ENCODE measurements at regions of chr3 and their contacts with region 1.

Region 1: GRCh38 chr3:69306239-69307185 is 79.4 kb downstream of the FRMD4B start:
- DNase-seq: peak; percentile 82
- ATAC-seq: peak; percentile 98
- H3K4me3 Mint-ChIP-seq: peak overlapping the region; percentile 17
- H3K27ac Mint-ChIP-seq: peak overlapping the region; percentile 65
- H3K4me1 Mint-ChIP-seq: peaks cover 8% of the 10 kb centered on the region
- H3K27me3 Mint-ChIP-seq: no peaks in the 10 kb centered on the region

Region 2: DNA sequence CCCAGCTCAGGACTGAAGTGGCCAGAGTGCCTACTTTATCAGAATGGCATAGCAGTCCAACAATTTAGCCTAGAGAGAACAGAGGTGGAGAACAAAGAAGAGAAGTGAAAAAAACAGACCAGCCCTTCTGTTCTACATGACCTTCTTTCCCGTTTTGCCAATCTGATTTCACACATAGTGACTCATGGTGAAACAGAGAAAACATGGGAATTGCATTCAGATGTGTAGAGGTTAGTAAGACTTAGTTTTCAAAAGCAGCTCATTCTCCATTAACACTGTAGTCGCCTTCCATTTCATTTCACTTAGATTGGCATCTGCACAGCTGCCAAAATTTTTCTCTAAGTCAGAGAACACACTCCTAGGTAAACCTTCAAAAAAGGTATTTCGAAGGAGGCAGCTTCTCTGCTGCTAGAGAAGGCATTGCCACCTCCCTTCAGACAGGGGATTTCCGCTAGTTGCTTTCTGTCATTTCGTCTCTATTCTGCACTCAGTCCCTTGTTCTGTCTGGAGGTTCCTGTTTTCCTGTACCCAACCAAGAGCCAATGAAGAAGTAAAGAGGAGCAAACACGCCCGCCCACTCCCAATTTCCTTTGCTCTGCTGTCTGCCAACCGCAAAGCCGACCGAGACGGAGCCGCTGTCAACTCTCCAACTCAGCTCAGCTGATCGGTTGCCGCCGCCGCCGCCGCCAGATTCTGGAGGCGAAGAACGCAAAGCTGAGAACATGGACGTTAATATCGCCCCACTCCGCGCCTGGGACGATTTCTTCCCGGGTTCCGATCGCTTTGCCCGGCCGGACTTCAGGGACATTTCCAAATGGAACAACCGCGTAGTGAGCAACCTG is 222.0 kb before region 1 on chr3 and contains the start of gene ARL6IP5:
- CTCF ChIA-PET with region 1: no interaction called
- POLR2A ChIA-PET with region 1: no interaction called
- DNase-seq: peak; percentile 96
- ATAC-seq: peak; percentile 65
- H3K4me3 Mint-ChIP-seq: peak within 1 kb of the TSS; percentile 95
- H3K27ac Mint-ChIP-seq: peak within 1 kb of the TSS; percentile 89
- H3K4me1 Mint-ChIP-seq: peaks cover 57% of the 10 kb centered on the region
- H3K27me3 Mint-ChIP-seq: no peaks in the 10 kb centered on the region
- total RNA-seq, gene ARL6IP5: 148 to 153 TPM

Region 3: DNA sequence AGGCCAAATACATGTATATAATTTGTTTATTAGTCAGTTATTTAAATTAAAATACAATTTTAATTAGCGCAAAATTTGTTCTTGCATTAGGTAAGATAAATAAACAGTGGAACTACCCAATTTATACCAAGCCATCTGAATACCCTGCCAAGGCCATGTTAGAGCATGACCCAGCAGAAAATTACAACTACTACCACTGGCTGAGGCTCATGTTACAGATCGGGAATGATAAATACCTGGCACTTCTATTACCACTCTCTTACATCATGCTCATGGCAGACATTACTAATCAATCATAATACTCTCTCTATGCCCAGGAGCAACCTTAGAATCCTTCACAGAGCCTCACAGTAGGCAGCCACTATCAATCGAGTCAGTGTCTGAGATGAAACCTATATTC is 162.9 kb before region 1 on chr3:
- CTCF ChIA-PET with region 1: interaction called, 13 read pairs
- POLR2A ChIA-PET with region 1: no interaction called
- DNase-seq: no peak
- ATAC-seq: no peak
- H3K4me3 Mint-ChIP-seq: no peak overlapping the region
- H3K27ac Mint-ChIP-seq: no peak overlapping the region
- H3K4me1 Mint-ChIP-seq: no peaks in the 10 kb centered on the region
- H3K27me3 Mint-ChIP-seq: peaks cover 19% of the 10 kb centered on the region

Region 4: DNA sequence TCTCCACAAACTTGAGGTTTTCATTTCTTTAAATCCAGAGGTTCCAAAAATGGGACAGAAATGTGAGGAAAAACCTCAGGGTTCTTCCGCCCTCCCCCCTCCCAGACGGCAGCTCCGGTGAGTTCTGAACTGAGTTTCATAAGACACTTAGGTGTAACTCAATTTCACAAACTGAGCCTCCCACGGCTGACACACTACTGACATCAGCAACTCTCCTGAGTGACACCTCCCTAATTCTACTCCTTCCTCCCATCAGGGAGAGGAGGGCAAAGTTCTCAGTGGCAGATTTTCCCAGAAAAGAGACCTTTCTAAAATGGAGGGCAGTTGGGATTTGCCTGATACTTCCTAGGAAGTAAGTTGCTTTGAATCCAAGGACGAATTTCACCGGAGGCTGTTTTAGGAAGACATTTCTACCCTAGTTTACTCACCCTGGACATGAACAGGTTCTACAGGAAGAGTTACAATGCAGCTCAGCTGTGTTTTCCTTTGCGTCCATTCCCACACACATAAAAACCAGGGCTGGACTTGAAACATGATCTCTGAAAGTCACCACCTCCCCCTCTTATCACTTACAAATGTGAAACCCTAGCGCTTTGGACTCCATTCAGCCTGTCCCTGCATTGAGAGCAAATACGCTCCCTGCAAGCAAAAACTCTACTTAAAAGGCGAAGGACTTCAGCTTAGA is 106.0 kb before region 1 on chr3:
- CTCF ChIA-PET with region 1: interaction called, 37 read pairs
- POLR2A ChIA-PET with region 1: no interaction called
- DNase-seq: peak; percentile 59
- ATAC-seq: peak; percentile 31
- H3K4me3 Mint-ChIP-seq: peak overlapping the region; percentile 77
- H3K27ac Mint-ChIP-seq: peak overlapping the region; percentile 82
- H3K4me1 Mint-ChIP-seq: peaks cover 80% of the 10 kb centered on the region
- H3K27me3 Mint-ChIP-seq: no peaks in the 10 kb centered on the region

Region 5: GRCh38 chr3:69250014-69250413 is 56.5 kb before region 1 on chr3:
- CTCF ChIA-PET with region 1: no interaction called
- POLR2A ChIA-PET with region 1: no interaction called
- DNase-seq: peak; percentile 45
- ATAC-seq: peak; percentile 49
- H3K4me3 Mint-ChIP-seq: peak overlapping the region; percentile 40
- H3K27ac Mint-ChIP-seq: no peak overlapping the region
- H3K4me1 Mint-ChIP-seq: peaks cover 7% of the 10 kb centered on the region
- H3K27me3 Mint-ChIP-seq: peaks cover 10% of the 10 kb centered on the region

Region 6: GRCh38 chr3:69288161-69288895 is 18.2 kb before region 1 on chr3:
- CTCF ChIA-PET with region 1: interaction called, 28 read pairs
- POLR2A ChIA-PET with region 1: no interaction called
- DNase-seq: no peak
- ATAC-seq: no peak
- H3K4me3 Mint-ChIP-seq: no peak overlapping the region
- H3K27ac Mint-ChIP-seq: no peak overlapping the region
- H3K4me1 Mint-ChIP-seq: peaks cover 7% of the 10 kb centered on the region
- H3K27me3 Mint-ChIP-seq: no peaks in the 10 kb centered on the region

Region 7: GRCh38 chr3:69324362-69325025 is 18.0 kb after region 1 on chr3:
- CTCF ChIA-PET with region 1: interaction called, 29 read pairs
- POLR2A ChIA-PET with region 1: no interaction called
- DNase-seq: peak; percentile 33
- ATAC-seq: peak; percentile 24
- H3K4me3 Mint-ChIP-seq: no peak overlapping the region
- H3K27ac Mint-ChIP-seq: no peak overlapping the region
- H3K4me1 Mint-ChIP-seq: peaks cover 36% of the 10 kb centered on the region
- H3K27me3 Mint-ChIP-seq: no peaks in the 10 kb centered on the region

Region 8: GRCh38 chr3:69439643-69440270 is 133.2 kb after region 1 on chr3:
- CTCF ChIA-PET with region 1: interaction called, 10 read pairs
- POLR2A ChIA-PET with region 1: no interaction called
- DNase-seq: no peak
- ATAC-seq: no peak
- H3K4me3 Mint-ChIP-seq: no peak overlapping the region
- H3K27ac Mint-ChIP-seq: no peak overlapping the region
- H3K4me1 Mint-ChIP-seq: no peaks in the 10 kb centered on the region
- H3K27me3 Mint-ChIP-seq: no peaks in the 10 kb centered on the region

Region 9: GRCh38 chr3:69532544-69533224 is 226.2 kb after region 1 on chr3:
- CTCF ChIA-PET with region 1: no interaction called
- POLR2A ChIA-PET with region 1: no interaction called
- DNase-seq: no peak
- ATAC-seq: no peak
- H3K4me3 Mint-ChIP-seq: no peak overlapping the region
- H3K27ac Mint-ChIP-seq: no peak overlapping the region
- H3K4me1 Mint-ChIP-seq: no peaks in the 10 kb centered on the region
- H3K27me3 Mint-ChIP-seq: no peaks in the 10 kb centered on the region

Region 10: GRCh38 chr3:69724722-69725435 is 418.4 kb after region 1 on chr3:
- CTCF ChIA-PET with region 1: no interaction called
- POLR2A ChIA-PET with region 1: no interaction called
- DNase-seq: no peak
- ATAC-seq: no peak
- H3K4me3 Mint-ChIP-seq: no peak overlapping the region
- H3K27ac Mint-ChIP-seq: no peak overlapping the region
- H3K4me1 Mint-ChIP-seq: no peaks in the 10 kb centered on the region
- H3K27me3 Mint-ChIP-seq: no peaks in the 10 kb centered on the region